CD4-positive, alpha-beta T cell (primary cell): ENCODE measurements at regions of chr6 and their contacts with region 1.

Region 1: GRCh38 chr6:3449750-3450305 is 7.0 kb downstream of the SLC22A23 start:
- DNase-seq: no peak
- ATAC-seq: no peak
- H3K4me3 ChIP-seq: no peak overlapping the region
- H3K4me3 Mint-ChIP-seq: no peak overlapping the region
- H3K27ac ChIP-seq: no peak overlapping the region
- H3K27ac Mint-ChIP-seq: peak overlapping the region; percentile 28
- H3K4me1 ChIP-seq: peaks cover 18% of the 10 kb centered on the region
- H3K4me1 Mint-ChIP-seq: peaks cover 16% of the 10 kb centered on the region
- H3K27me3 ChIP-seq: peaks cover 3 to 6% of the 10 kb centered on the region in 2 experiments
- H3K27me3 Mint-ChIP-seq: no peaks in the 10 kb centered on the region
- CTCF ChIP-seq: no peak

Region 2: DNA sequence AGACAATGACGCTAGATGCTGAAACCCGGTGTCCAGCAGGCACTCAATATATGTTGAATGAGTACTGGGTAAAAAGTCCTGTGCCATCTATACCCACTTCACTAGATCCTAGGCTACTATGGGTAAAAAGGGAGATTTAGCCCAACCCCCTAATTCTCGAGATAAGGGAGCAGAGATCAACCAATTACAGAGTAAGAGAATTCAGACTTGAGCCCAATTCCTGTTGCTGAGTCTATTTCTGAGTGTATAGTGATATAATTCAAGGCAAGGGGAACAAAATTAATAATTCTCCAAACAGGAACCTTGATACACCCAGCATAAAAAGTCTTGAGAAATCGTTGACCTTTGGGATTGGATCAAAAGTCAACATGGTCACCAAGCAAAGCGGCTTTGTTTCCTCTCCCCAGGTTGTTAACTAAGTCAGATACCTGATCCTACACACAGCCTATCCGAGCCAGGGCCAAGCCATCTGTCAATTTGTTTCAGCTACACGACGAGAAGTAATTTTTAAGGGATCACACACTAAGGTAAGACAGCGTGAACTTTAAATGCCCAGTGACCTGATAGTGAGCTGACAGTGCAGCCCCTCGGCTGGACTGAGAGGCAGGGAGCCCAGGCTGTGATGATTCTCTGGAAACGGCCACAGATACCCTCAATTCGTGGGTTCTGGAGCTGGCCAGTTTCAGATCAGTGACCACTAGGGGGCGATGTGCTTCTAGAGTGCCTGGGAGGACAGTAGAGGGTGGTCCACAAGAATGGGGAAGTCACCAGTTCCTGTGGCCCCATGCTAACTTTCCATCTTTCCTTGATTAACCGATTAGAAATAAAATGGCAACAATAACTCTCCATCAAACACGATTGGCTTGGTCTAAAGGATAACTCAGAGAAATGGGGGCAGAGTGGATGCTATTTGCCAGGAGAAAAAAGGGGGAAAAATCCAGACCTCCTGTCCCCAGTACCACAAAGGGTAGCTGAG is 39.2 kb before region 1 on chr6:
- CTCF ChIA-PET with region 1: no interaction called
- POLR2A ChIA-PET with region 1: interaction called, 3 read pairs
- intact Hi-C with region 1: loop called (anchors 2 kb)
- DNase-seq: peak; percentile 37 to 83 (median 56)
- ATAC-seq: peak; percentile 50
- H3K4me3 ChIP-seq: no peak overlapping the region
- H3K4me3 Mint-ChIP-seq: no peak overlapping the region
- H3K27ac ChIP-seq: no peak overlapping the region
- H3K27ac Mint-ChIP-seq: no peak overlapping the region
- H3K4me1 ChIP-seq: peaks cover 11% of the 10 kb centered on the region
- H3K4me1 Mint-ChIP-seq: peaks cover 22% of the 10 kb centered on the region
- H3K27me3 ChIP-seq: no peaks in the 10 kb centered on the region
- H3K27me3 Mint-ChIP-seq: no peaks in the 10 kb centered on the region
- CTCF ChIP-seq: peak; percentile 75

Region 3: DNA sequence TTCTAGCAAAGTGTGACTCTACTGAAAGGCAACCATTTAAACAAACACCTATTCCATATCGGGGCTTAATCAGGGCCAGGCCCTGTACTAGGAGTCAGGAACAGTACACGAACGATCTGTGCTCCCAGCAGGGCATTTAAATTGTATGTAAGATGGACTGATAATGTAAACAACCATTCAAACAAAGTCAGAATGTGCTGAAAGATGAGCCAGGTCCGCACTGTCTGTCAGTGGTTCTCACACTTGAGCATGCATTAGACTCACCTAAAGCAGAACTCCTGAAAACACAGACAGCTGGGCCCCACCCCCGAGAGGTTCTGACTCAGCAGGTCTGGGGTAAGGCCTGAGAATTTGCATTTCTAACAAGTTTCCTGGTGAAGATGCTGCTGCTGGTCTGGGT is 220.1 kb after region 1 on chr6:
- CTCF ChIA-PET with region 1: no interaction called
- POLR2A ChIA-PET with region 1: no interaction called
- intact Hi-C with region 1: no loop called
- DNase-seq: no peak
- ATAC-seq: no peak
- H3K4me3 ChIP-seq: no peak overlapping the region
- H3K4me3 Mint-ChIP-seq: no peak overlapping the region
- H3K27ac ChIP-seq: no peak overlapping the region
- H3K27ac Mint-ChIP-seq: no peak overlapping the region
- H3K4me1 ChIP-seq: no peaks in the 10 kb centered on the region
- H3K4me1 Mint-ChIP-seq: no peaks in the 10 kb centered on the region
- H3K27me3 ChIP-seq: no peaks in the 10 kb centered on the region
- H3K27me3 Mint-ChIP-seq: peaks cover 5% of the 10 kb centered on the region
- CTCF ChIP-seq: no peak